Activated CD4-positive, alpha-beta T cell treated with anti-CD3 and anti-CD28 coated beads, Interleukin-2, amount 10 ng/mL, durations not matched to agents 24 days and 14 days (primary cell): ENCODE measurements at regions of chr1 and their contacts with region 1.

Region 1: DNA sequence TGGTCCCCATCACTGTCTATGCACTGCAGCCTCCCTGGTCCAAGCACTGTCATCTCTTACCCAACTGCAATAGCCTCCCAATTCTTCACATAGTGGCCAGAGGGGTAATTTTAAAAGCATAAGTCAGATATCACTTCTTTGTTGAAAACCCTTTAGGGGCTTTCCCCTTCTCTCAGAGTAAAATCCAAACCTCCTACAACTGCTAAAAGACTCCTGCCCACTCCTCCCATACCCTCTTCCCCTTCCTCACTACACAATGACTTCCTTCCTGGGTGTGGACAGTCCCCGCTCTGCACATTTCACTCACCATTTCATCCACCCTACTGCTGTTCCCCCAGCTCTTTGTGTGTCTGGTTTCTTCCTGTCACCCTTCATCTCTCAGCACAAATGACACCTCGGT is 8.3 kb downstream of the MCOLN2 start:
- DNase-seq: peak; percentile 71
- H3K4me3 Mint-ChIP-seq: peak overlapping the region; percentile 67
- H3K27ac Mint-ChIP-seq: peak overlapping the region; percentile 72
- H3K4me1 Mint-ChIP-seq: peaks cover 53% of the 10 kb centered on the region
- H3K27me3 Mint-ChIP-seq: no peaks in the 10 kb centered on the region

Region 2: GRCh38 chr1:84298328-84298683 is 690.3 kb before region 1 on chr1:
- intact Hi-C with region 1: loop called (anchors 5 kb)
- DNase-seq: peak; percentile 88
- H3K4me3 Mint-ChIP-seq: peak overlapping the region; percentile 91
- H3K27ac Mint-ChIP-seq: peak overlapping the region; percentile 85
- H3K4me1 Mint-ChIP-seq: peaks cover 33% of the 10 kb centered on the region
- H3K27me3 Mint-ChIP-seq: peaks cover 13% of the 10 kb centered on the region

Region 3: DNA sequence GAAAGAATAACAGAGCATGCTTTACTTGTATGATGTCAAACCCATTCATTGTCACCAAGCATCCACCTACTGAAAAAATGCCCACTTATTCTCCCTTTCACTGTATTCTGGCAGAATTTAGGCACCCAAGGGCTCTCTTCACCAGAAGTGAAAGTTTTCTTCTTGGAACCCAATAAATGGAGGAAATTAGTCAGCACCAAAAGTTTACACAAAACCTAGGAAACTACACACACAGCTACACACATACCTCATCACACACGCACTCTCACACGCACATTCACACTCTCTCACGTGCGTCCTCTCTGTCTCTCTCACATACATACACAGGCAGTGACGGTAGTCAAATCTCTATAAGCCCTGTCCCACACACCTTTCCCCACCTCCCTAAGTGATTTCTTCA is 29.3 kb before region 1 on chr1:
- intact Hi-C with region 1: loop called (anchors 1 kb)
- DNase-seq: peak; percentile 85
- H3K4me3 Mint-ChIP-seq: no peak overlapping the region
- H3K27ac Mint-ChIP-seq: peak overlapping the region; percentile 69
- H3K4me1 Mint-ChIP-seq: peaks cover 22% of the 10 kb centered on the region
- H3K27me3 Mint-ChIP-seq: no peaks in the 10 kb centered on the region

Region 4: DNA sequence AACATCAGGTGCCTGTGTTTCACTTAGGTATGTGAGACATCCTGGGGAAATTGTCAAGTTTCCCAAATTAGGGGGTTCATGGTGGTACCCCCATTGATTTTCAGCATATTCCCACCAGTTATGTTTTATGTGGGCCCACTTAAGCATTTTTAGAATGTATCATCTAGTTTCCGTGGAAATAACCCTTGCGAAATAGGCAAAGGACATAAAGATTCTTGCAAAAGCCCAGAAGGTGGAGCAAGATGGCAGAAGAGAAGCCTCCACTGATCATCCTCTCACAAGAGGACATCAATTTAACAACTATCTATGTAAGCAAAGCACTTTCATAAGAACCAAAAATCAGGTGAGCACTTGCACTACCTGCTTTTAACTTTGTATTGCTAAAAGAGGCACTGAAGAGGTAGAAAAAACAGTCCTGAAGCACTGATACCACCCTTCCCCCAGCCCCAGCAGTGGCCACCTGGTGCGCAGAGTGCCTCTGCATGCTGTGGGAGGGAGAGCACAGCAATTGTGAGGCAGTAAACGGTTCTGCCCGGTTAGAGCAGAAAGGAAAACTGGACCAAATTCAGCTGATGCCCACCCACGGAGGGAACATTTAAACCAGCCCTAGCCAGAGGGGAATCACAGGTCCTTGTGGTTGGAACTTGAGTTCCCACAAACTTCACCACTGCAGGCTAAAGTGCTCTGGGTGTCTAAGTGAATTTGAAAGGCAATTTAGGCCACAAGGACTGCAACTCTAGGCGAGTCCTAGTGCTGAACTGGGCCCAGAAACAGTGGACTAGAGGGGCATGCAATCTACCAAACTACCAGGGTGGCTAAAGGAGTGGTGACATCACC is 14.9 kb before region 1 on chr1:
- intact Hi-C with region 1: loop called (anchors 1 kb)
- DNase-seq: peak; percentile 65
- H3K4me3 Mint-ChIP-seq: peak overlapping the region; percentile 61
- H3K27ac Mint-ChIP-seq: peak overlapping the region; percentile 83
- H3K4me1 Mint-ChIP-seq: peaks cover 65% of the 10 kb centered on the region
- H3K27me3 Mint-ChIP-seq: no peaks in the 10 kb centered on the region

Region 5: DNA sequence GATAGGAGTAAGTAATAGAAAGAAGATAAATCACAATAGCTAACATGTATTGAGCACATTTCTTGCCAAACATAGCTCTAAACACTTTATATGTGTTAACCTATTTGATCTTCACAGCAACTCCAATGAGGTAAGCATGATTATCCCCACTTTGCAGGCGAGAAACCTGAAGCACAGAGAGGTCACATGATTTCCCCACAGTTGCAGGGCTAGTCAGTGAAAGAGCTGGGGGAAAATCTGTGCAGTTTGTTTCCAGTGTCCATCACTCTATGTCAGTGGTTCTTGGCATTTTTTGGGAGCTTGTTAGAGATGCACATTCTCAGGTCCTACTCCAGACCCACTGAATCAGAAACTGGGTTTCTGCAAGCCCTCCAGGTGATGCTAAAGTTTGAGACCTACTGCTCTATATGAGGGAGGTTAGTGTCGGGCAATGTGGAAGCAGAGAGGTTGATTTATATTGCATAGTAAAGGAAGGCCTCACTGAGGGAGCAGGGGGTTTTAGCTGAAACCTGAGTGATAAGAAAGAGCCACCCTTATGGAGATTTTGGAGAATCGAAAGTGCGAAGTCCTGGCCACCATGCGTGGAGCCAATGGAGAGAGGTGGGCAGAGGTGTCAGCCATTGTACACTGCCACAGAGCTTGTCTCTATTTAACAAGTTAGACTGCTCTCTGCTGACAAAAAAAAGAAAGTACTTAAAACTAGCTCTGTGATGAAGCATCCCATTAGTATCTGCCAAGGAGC is 38.8 kb after region 1 on chr1:
- intact Hi-C with region 1: loop called (anchors 5 kb)
- DNase-seq: peak; percentile 74
- H3K4me3 Mint-ChIP-seq: no peak overlapping the region
- H3K27ac Mint-ChIP-seq: peak overlapping the region; percentile 72
- H3K4me1 Mint-ChIP-seq: peaks cover 8% of the 10 kb centered on the region
- H3K27me3 Mint-ChIP-seq: peaks cover 5% of the 10 kb centered on the region

Region 6: GRCh38 chr1:85058311-85058710 is 69.7 kb after region 1 on chr1:
- intact Hi-C with region 1: no loop called
- DNase-seq: no peak
- H3K4me3 Mint-ChIP-seq: no peak overlapping the region
- H3K27ac Mint-ChIP-seq: no peak overlapping the region
- H3K4me1 Mint-ChIP-seq: peaks cover 17% of the 10 kb centered on the region
- H3K27me3 Mint-ChIP-seq: peaks cover 30% of the 10 kb centered on the region